ENCODE measurements at regions of chr10 and their contacts with region 1.

Region 1: GRCh38 chr10:101797403-101798059 is 14.3 kb upstream of the NPM3 start:
- DNase-seq: no peak
- ATAC-seq: no peak
- H3K4me3 Mint-ChIP-seq: no peak overlapping the region
- H3K27ac Mint-ChIP-seq: no peak overlapping the region
- H3K4me1 Mint-ChIP-seq: peaks cover 5% of the 10 kb centered on the region
- H3K27me3 Mint-ChIP-seq: no peaks in the 10 kb centered on the region
- CTCF ChIP-seq: no peak

Region 2: DNA sequence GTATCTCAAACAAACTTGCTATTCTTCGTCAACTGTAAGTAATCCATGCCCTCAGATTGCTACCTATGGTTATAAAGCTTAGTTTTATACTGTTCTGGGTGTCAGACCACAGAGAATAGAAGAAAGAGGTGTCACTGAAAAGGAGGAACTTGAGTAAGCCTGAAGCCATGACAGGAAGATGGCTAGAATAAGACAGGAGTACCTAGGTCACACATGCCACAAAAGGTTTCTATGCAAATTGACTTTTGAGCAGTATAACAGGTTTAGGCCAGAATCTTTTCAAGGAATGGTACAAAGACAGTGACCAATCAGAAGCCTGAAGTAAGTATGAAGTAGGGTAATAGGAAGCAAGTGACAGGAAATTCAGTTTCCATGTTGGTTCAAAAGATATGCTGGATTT is 126.1 kb before region 1 on chr10:
- CTCF ChIA-PET with region 1: no interaction called
- POLR2A ChIA-PET with region 1: interaction called, 10 read pairs
- intact Hi-C with region 1: no loop called
- DNase-seq: no peak
- ATAC-seq: peak; percentile 31
- H3K4me3 Mint-ChIP-seq: no peak overlapping the region
- H3K27ac Mint-ChIP-seq: peak overlapping the region; percentile 37
- H3K4me1 Mint-ChIP-seq: peaks cover 21% of the 10 kb centered on the region
- H3K27me3 Mint-ChIP-seq: no peaks in the 10 kb centered on the region
- CTCF ChIP-seq: no peak

Region 3: DNA sequence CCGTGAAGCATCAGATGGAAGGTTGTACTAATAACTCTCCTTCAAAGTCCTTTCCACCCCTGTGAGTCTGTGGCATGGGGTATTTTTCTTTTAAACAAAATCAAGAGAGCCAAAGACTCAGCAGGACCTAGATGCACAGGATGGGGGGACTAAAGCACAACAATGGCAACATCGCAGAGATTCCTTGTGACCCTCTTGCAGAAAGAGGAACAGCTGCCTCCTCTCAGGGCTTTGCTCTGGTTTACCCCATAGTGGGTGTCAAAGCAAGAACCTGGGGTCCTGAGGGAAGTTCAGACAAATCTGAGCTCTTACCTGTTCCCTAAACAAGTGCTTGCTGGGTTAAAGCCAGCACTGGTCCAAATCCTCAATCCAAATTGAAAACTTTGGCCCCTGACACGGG is 60.9 kb before region 1 on chr10:
- CTCF ChIA-PET with region 1: no interaction called
- POLR2A ChIA-PET with region 1: no interaction called
- intact Hi-C with region 1: no loop called
- DNase-seq: no peak
- ATAC-seq: no peak
- H3K4me3 Mint-ChIP-seq: no peak overlapping the region
- H3K27ac Mint-ChIP-seq: no peak overlapping the region
- H3K4me1 Mint-ChIP-seq: no peaks in the 10 kb centered on the region
- H3K27me3 Mint-ChIP-seq: peaks cover 36% of the 10 kb centered on the region
- CTCF ChIP-seq: no peak

Region 4: DNA sequence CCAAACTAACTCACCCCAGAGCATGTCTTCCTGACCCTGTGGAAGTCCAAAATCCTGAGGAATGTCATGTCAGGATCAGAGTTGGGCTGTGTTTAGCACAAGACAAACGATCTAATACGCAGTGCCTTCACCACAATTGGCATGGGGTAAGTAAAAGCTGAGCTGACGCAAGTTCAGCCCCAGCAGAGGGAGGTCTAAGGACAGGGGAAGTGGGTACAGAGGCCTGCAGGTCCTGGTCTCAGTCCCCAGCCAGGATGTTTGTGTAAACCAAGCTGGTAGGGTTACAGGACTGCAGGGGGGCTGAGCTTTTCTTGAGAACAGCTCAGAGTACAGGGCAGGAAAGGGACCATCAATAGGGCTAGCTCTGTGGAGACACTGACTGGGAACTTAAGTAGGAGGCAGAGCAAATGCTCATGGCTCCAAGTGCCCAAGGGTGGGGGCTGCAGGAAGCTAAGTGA is 51.4 kb after region 1 on chr10:
- CTCF ChIA-PET with region 1: no interaction called
- POLR2A ChIA-PET with region 1: no interaction called
- intact Hi-C with region 1: no loop called
- DNase-seq: no peak
- ATAC-seq: no peak
- H3K4me3 Mint-ChIP-seq: no peak overlapping the region
- H3K27ac Mint-ChIP-seq: no peak overlapping the region
- H3K4me1 Mint-ChIP-seq: peaks cover 12% of the 10 kb centered on the region
- H3K27me3 Mint-ChIP-seq: no peaks in the 10 kb centered on the region
- CTCF ChIP-seq: no peak

Region 5: DNA sequence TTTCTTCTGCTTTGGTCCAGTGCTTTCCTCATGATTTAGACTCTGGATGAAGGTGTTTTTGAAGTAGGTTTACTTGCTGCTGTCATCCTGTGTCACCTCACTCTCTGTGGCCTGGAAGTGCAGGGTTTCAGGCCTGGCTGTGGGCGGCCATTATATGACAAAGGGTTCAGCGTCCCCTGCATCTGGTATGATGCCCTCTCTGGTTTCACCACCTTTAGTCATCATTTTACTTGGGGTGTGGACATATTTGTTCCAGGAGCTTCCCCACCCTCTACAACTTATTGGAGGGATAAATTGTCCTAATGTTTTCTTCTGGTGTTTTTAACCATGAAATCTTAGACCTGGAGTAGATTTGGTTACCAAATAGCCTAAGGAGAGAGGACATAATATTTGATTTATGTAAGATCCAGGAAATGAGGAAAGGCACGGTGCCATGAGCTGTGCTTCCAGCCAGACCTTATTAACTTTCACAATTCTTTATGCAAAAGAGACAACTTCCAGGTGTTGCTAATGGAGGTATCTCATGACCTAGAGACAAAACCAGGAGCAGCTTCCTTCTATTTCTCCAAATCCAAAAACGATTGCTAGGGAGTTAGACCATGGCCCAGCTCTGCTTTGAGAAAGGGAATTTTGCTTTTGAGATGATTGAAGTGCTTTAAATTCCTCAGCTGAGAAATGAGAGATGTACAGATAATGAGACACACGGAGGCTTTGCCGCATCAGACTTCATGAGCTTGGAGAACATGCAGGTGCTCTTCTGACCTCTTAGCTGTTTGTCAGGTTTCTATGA is 967.1 kb after region 1 on chr10:
- CTCF ChIA-PET with region 1: no interaction called
- POLR2A ChIA-PET with region 1: no interaction called
- intact Hi-C with region 1: no loop called
- DNase-seq: no peak
- ATAC-seq: no peak
- H3K4me3 Mint-ChIP-seq: no peak overlapping the region
- H3K27ac Mint-ChIP-seq: no peak overlapping the region
- H3K4me1 Mint-ChIP-seq: peaks cover 14% of the 10 kb centered on the region
- H3K27me3 Mint-ChIP-seq: no peaks in the 10 kb centered on the region
- CTCF ChIP-seq: no peak

Measured in activated B cell treated with CpG ODN at 0.5 μM for 24 hours (primary cell).